Ascending aorta (tissue), 2 donors: ENCODE measurements at regions of chr3 and their contacts with region 1.

Region 1: DNA sequence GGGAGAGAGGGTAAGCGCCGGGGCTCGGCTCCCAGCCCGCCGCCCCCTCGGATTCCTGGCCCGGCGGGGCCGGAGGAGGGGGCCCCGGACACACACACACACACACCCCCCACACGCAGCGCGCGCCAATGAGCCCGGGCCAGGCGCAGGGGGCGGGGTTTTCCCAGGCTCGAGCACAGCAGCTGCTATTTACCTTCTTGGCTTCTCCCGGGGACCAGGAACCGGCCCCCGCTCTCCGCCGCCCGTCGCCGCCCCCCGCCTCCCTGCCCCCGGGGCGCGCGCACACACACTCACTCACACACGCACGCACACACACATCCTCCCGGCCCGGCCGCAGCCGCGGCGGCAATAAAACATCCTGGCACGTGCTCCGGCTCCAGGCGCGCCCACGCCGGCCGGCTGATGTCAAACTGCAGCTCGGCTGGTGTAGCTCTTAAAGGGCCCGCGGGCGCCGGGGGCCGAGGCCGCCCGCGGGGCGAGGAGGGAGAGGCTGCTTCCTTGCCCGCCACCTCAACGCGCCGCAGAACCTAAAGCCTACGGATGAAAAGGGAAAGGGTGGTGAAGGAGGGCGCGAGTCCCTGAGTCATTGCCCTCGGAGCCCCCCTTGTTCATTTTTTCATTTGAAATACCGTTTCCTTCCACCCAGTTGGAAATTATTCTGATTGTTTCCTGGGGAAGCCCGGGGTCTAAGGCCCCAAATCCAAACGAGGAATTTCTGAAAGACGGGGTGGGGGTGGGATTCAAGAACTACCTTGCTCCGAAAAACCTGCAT is 1.0 kb upstream of the HES1 start:
- DNase-seq: peak; percentile 84 to 94
- H3K4me3 ChIP-seq: peak overlapping the region; percentile 80 to 87
- H3K27ac ChIP-seq: peak overlapping the region; percentile 96 to 98
- H3K4me1 ChIP-seq: peaks cover 6 to 31% of the 10 kb centered on the region in 2 donors
- H3K27me3 ChIP-seq: no peaks in the 10 kb centered on the region
- CTCF ChIP-seq: no peak

Region 2: GRCh38 chr3:193780810-193781472 is 354.0 kb before region 1 on chr3:
- intact Hi-C with region 1: loop called (anchors 1 kb)
- DNase-seq: peak in 1 of 2 donors; percentile 78
- H3K4me3 ChIP-seq: no peak overlapping the region
- H3K27ac ChIP-seq: no peak overlapping the region
- H3K4me1 ChIP-seq: peaks cover 0 to 4% of the 10 kb centered on the region in 2 donors
- H3K27me3 ChIP-seq: no peaks in the 10 kb centered on the region
- CTCF ChIP-seq: peak; percentile 65 to 78 (median 73)

Region 3: GRCh38 chr3:194089357-194090177 is 45.4 kb before region 1 on chr3:
- intact Hi-C with region 1: loop called (anchors 5 kb)
- DNase-seq: peak; percentile 60 to 80
- H3K4me3 ChIP-seq: no peak overlapping the region
- H3K27ac ChIP-seq: no peak overlapping the region
- H3K4me1 ChIP-seq: peaks cover 7 to 15% of the 10 kb centered on the region in 2 donors
- H3K27me3 ChIP-seq: no peaks in the 10 kb centered on the region
- CTCF ChIP-seq: no peak

Region 4: GRCh38 chr3:194315088-194315964 is 180.4 kb after region 1 on chr3:
- intact Hi-C with region 1: loop called (anchors 2 kb)
- DNase-seq: peak in 1 of 2 donors; percentile 89
- H3K4me3 ChIP-seq: peak overlapping the region; percentile 53 to 54
- H3K27ac ChIP-seq: no peak overlapping the region
- H3K4me1 ChIP-seq: peaks cover 4 to 11% of the 10 kb centered on the region in 2 donors
- H3K27me3 ChIP-seq: no peaks in the 10 kb centered on the region
- CTCF ChIP-seq: peak; percentile 96 to 98 (median 96)

Region 5: GRCh38 chr3:194583604-194584318 is 448.8 kb after region 1 on chr3:
- intact Hi-C with region 1: loop called (anchors 2 kb)
- DNase-seq: peak; percentile 54 to 93
- H3K4me3 ChIP-seq: peak overlapping the region; percentile 79 to 83
- H3K27ac ChIP-seq: peak overlapping the region; percentile 96 to 97
- H3K4me1 ChIP-seq: peaks cover 15 to 46% of the 10 kb centered on the region in 2 donors
- H3K27me3 ChIP-seq: no peaks in the 10 kb centered on the region
- CTCF ChIP-seq: peak in 1 of 3 experiments; percentile 6

Region 6: DNA sequence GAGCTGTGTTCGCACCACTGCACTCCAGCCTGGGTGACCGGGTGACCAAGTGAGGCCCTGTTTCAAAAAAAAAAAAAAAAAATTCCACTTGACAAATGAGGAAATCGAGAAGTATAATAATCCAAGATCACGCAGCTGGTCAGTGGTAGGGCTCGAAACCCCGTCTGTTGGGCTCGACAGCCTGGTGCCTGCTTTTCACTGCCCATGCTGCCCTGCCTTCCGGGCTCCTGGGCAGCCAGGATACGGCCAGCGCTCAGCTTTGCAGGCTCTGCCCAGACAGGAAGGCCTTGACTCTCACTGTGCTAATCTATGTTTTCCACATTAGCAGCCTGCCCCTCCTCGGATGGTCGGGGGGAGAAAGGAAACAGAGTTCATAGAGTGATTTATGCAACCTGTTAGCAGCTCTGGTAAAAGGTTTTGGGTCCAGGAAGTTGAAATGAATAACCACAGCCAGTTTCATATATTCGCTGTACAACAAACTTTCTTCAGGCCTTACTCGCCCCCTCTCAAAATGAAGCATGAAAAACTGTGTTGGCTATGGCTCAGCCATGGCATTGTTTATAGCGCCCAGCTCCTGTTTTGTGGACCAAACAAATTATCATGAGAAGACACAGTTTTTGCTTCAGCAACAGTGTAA is 1027.2 kb after region 1 on chr3:
- intact Hi-C with region 1: no loop called
- DNase-seq: no peak
- H3K4me3 ChIP-seq: no peak overlapping the region
- H3K27ac ChIP-seq: peak overlapping the region; percentile 26 to 42
- H3K4me1 ChIP-seq: peaks cover 0 to 3% of the 10 kb centered on the region in 2 donors
- H3K27me3 ChIP-seq: no peaks in the 10 kb centered on the region
- CTCF ChIP-seq: no peak